ENCODE measurements at regions of chr2 and their contacts with region 1.

Region 1: DNA sequence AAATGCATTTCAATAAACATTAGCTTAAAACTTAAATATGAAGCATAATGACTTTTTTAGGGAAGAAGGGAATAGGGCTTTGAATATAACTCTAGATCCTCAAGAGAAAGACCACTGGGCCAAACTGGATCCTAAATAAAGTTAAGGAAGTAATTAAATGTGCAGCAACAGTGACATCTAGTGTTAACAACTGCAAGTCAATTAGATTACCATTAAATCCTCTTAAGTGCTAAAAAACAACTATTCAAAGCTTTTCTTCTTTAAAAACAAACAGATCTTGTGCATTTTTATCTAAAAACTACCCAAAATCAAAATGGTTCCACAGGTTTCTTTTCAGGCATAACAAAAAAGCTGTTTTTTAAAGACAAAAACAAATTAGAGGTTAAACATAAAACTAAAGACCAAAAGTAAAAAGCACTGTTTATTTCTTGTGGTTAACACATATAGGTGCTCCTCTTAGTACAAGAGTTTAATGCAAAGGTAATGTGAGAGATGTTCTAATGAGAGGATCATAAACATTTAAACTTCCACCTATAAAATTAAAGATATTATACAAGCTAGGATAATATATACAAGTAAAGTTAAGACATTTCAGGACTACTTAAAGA is 111.4 kb downstream of the THADA start:
- DNase-seq: no peak
- H3K4me3 ChIP-seq: no peak overlapping the region
- H3K27ac ChIP-seq: peak overlapping the region; percentile 72
- H3K4me1 ChIP-seq: peaks cover 29% of the 10 kb centered on the region
- H3K27me3 ChIP-seq: no peaks in the 10 kb centered on the region
- CTCF ChIP-seq: peak; percentile 81

Region 2: GRCh38 chr2:42828487-42829425 is 655.7 kb before region 1 on chr2:
- intact Hi-C with region 1: loop called (anchors 10 kb)
- DNase-seq: peak; percentile 74
- H3K4me3 ChIP-seq: peak overlapping the region; percentile 1
- H3K27ac ChIP-seq: peak overlapping the region; percentile 53
- H3K4me1 ChIP-seq: peaks cover 28% of the 10 kb centered on the region
- H3K27me3 ChIP-seq: no peaks in the 10 kb centered on the region
- CTCF ChIP-seq: peak; percentile 98

Region 3: DNA sequence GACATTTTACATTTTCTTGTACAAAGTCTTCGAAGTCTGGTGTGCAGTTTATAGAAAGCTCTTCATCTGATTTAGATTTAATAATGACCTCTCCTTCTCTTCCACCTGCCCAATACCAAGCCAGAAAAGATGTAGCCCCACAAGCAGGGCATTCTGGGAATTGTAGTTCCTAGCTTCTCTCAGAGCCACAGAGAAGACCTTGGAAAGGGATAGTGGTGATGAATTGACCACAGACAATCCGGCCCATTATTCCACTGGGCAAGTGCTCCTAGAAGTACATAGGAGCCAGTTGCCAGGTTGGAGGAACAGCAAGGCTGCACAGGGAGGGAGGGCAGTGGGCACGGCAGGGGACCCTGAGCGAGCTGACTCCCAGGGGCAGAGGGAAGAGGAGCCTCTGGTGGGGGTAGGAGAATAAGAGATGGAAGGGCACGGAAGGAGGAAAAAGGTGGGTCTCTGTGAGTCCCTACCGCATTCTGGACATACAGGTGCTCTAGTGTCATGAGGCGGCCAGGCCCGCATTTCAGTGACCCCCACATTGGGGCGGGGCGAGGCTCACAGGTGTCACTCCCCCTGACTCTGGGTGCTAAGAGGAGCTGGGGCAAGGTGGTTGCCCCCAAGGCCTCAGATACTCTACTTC is 539.5 kb before region 1 on chr2:
- intact Hi-C with region 1: loop called (anchors 10 kb)
- DNase-seq: no peak
- H3K4me3 ChIP-seq: no peak overlapping the region
- H3K27ac ChIP-seq: peak overlapping the region; percentile 65
- H3K4me1 ChIP-seq: peaks cover 46% of the 10 kb centered on the region
- H3K27me3 ChIP-seq: no peaks in the 10 kb centered on the region
- CTCF ChIP-seq: no peak

Region 4: GRCh38 chr2:43131024-43131889 is 353.2 kb before region 1 on chr2:
- intact Hi-C with region 1: loop called (anchors 10 kb)
- DNase-seq: peak; percentile 63
- H3K4me3 ChIP-seq: no peak overlapping the region
- H3K27ac ChIP-seq: peak overlapping the region; percentile 65
- H3K4me1 ChIP-seq: peaks cover 60% of the 10 kb centered on the region
- H3K27me3 ChIP-seq: no peaks in the 10 kb centered on the region
- CTCF ChIP-seq: peak; percentile 61

Region 5: GRCh38 chr2:43239981-43240761 is 244.3 kb before region 1 on chr2:
- intact Hi-C with region 1: loop called (anchors 10 kb)
- DNase-seq: no peak
- H3K4me3 ChIP-seq: no peak overlapping the region
- H3K27ac ChIP-seq: peak overlapping the region; percentile 57
- H3K4me1 ChIP-seq: no peaks in the 10 kb centered on the region
- H3K27me3 ChIP-seq: no peaks in the 10 kb centered on the region
- CTCF ChIP-seq: peak; percentile 21